ENCODE measurements at regions of chr6 and their contacts with region 1.

Region 1: GRCh38 chr6:39812853-39813533 is 20.8 kb downstream of the DAAM2 start:
- DNase-seq: peak in 1 of 10 donors; percentile 45

Region 2: DNA sequence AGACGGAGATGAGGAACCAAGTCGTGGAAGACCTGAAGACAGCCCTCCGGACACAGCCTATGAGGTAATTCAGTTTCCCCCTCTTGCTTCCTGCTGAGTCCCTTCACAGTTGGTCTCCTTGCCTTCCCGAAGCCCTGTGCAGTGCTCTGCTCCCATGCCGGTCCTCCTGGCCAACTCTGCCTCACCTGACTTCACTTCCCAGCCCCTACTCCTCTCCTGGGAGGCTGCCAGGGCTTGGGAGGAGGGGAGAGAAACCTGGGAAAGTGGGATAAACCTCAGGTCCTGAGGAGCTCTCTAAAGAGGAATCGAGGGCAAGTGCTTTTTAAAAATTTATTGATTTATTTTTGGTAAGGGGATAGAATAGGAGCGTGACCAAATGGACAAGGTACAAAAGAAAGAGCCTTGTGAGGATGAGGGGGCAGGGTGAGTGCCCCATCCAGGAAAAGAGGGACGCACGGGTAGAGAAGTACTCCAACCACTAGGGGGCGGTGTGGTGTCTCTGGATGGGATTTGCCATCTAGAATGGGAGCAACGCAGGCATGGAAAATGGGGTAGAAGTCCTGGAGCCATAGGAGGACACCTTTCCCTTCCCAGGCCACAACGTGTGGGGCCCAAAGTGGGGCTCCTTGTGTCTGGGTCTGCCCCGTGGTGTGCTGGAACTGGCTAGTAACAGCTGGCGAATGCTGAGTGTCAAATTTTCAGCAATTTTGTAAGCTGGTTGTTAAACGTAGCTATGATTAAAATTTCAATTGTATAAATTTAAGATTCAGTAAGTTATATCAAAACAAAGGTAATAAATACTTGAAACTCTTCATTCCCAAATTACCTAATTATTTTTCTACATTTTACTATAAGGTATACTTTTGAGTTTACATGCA is 52.3 kb after region 1 on chr6:
- intact Hi-C with region 1: loop called (anchors 10 kb)
- DNase-seq: peak in 7 of 10 donors; percentile 49 to 92 (median 79)

Region 3: DNA sequence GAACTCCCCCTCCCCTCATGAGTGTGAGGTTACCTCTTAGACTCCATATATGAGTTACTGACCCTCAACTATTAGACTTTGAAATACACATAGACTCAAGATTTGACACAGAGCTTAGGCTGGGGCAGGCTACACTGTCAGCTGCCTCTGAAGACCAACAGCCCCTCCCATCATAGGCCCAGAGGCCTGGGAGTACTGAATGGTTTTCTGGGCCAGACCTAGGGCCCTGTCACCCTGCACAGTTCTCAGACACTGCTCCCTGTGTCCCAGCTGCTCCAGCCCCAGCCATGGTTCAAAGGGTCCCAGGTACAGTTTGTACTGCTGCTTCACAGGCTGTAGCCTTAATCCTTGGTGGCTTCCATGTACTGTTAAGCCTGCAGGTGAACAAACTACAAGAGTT is 253.4 kb after region 1 on chr6:
- intact Hi-C with region 1: no loop called
- DNase-seq: no peak